ENCODE measurements at regions of chr3 and their contacts with region 1.

Region 1: GRCh38 chr3:14467814-14468620 is 65.6 kb downstream of the SLC6A6 start:
- DNase-seq: peak; percentile 40
- ATAC-seq: peak; percentile 68
- H3K4me3 Mint-ChIP-seq: no peak overlapping the region
- H3K27ac Mint-ChIP-seq: no peak overlapping the region
- H3K4me1 Mint-ChIP-seq: peaks cover 7% of the 10 kb centered on the region
- H3K27me3 Mint-ChIP-seq: no peaks in the 10 kb centered on the region
- CTCF ChIP-seq: peak; percentile 60

Region 2: GRCh38 chr3:13657660-13658435 is 810.2 kb before region 1 on chr3:
- CTCF ChIA-PET with region 1: no interaction called
- POLR2A ChIA-PET with region 1: no interaction called
- intact Hi-C with region 1: loop called (anchors 5 kb)
- DNase-seq: peak; percentile 46
- ATAC-seq: peak; percentile 86
- H3K4me3 Mint-ChIP-seq: no peak overlapping the region
- H3K27ac Mint-ChIP-seq: no peak overlapping the region
- H3K4me1 Mint-ChIP-seq: peaks cover 4% of the 10 kb centered on the region
- H3K27me3 Mint-ChIP-seq: peaks cover 43% of the 10 kb centered on the region
- CTCF ChIP-seq: no peak

Region 3: DNA sequence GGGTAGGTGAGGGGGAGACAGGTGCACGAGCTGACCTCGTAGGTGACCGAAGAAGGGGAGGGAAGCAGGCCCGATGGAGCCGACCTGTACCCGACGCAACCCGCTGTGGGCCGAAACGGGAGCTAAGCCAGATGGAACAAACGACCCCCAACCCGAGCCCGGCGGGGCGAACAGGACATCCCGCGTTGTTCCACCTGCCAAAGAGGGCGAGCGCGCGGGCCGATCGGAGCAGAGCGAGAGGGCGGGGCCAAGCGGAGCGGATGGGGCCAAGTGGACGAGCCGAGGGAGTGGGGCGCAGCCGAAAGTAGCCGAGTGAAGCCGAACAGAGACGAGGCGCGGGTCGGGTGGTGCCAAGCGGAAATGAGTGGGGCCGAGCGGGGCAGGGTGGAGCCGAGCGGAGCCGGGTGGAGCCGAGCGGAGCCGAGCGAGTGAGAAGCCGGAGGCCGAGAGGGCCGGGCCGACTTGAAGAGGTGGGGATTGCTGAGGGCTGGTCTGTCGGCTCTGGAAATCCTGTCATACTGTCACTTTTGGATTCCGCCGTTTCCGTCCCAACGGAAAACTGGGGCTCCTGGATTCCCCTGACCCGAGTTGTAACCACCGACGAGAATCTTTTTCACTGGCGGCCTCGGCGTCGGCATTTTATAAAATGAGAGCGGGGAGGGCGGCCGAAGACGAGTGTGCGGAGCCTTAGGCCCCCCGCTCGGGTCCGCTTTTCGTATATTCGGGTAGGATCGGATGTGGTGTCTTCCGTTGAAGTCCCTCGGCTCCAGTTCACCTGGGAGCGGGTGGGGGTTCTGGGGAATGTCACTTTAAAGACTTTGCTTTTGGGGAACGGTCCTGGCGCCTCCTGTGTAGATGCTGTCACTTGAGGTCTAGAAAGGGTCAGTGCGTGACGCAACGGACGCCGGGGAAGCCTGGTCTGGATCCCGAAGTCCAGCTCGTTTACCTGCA is 572.6 kb before region 1 on chr3:
- CTCF ChIA-PET with region 1: no interaction called
- POLR2A ChIA-PET with region 1: no interaction called
- intact Hi-C with region 1: loop called (anchors 1 kb)
- DNase-seq: peak; percentile 86
- ATAC-seq: peak; percentile 99
- H3K4me3 Mint-ChIP-seq: peak overlapping the region; percentile 89
- H3K27ac Mint-ChIP-seq: peak overlapping the region; percentile 78
- H3K4me1 Mint-ChIP-seq: peaks cover 41% of the 10 kb centered on the region
- H3K27me3 Mint-ChIP-seq: peaks cover 5% of the 10 kb centered on the region
- CTCF ChIP-seq: no peak

Region 4: GRCh38 chr3:14203521-14204079 is 264.4 kb before region 1 on chr3:
- CTCF ChIA-PET with region 1: interaction called, 32 read pairs
- POLR2A ChIA-PET with region 1: no interaction called
- intact Hi-C with region 1: loop called (anchors 1 kb)
- DNase-seq: no peak
- ATAC-seq: peak; percentile 74
- H3K4me3 Mint-ChIP-seq: no peak overlapping the region
- H3K27ac Mint-ChIP-seq: peak overlapping the region; percentile 10
- H3K4me1 Mint-ChIP-seq: peaks cover 5% of the 10 kb centered on the region
- H3K27me3 Mint-ChIP-seq: no peaks in the 10 kb centered on the region
- CTCF ChIP-seq: peak; percentile 25

Region 5: DNA sequence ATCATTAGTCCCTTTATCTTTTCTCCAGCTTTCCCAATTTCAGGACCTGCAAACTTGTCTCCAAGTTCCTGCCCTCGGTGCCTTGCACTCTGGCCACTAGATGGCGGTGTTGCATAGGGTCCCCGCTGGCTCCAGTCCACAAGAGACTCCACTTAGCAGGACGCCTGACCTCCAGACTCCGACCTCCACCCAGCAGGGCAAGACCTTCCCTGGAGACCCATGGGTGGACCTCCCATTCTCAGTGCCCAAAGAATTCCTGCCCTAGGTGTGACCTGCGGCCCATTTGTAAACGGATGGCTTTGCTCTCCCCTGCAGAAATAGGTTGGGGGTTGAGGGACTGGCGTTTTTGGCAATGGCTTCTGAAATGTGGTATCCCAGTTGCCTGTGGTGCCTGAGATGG is 206.8 kb before region 1 on chr3:
- CTCF ChIA-PET with region 1: interaction called, 52 read pairs
- POLR2A ChIA-PET with region 1: no interaction called
- intact Hi-C with region 1: loop called (anchors 1 kb)
- DNase-seq: peak; percentile 67
- ATAC-seq: peak; percentile 58
- H3K4me3 Mint-ChIP-seq: no peak overlapping the region
- H3K27ac Mint-ChIP-seq: no peak overlapping the region
- H3K4me1 Mint-ChIP-seq: no peaks in the 10 kb centered on the region
- H3K27me3 Mint-ChIP-seq: peaks cover 10% of the 10 kb centered on the region
- CTCF ChIP-seq: peak; percentile 68

Region 6: GRCh38 chr3:14274999-14275961 is 192.7 kb before region 1 on chr3:
- CTCF ChIA-PET with region 1: interaction called, 10 read pairs
- POLR2A ChIA-PET with region 1: no interaction called
- intact Hi-C with region 1: no loop called
- DNase-seq: no peak
- ATAC-seq: no peak
- H3K4me3 Mint-ChIP-seq: no peak overlapping the region
- H3K27ac Mint-ChIP-seq: no peak overlapping the region
- H3K4me1 Mint-ChIP-seq: no peaks in the 10 kb centered on the region
- H3K27me3 Mint-ChIP-seq: peaks cover 11% of the 10 kb centered on the region
- CTCF ChIP-seq: no peak

Region 7: GRCh38 chr3:14548321-14548729 is 80.3 kb after region 1 on chr3:
- CTCF ChIA-PET with region 1: no interaction called
- POLR2A ChIA-PET with region 1: no interaction called
- intact Hi-C with region 1: loop called (anchors 1 kb)
- DNase-seq: no peak
- ATAC-seq: peak; percentile 47
- H3K4me3 Mint-ChIP-seq: no peak overlapping the region
- H3K27ac Mint-ChIP-seq: no peak overlapping the region
- H3K4me1 Mint-ChIP-seq: no peaks in the 10 kb centered on the region
- H3K27me3 Mint-ChIP-seq: peaks cover 27% of the 10 kb centered on the region
- CTCF ChIP-seq: no peak